ENCODE measurements at regions of chr2 and their contacts with region 1.

Region 1: GRCh38 chr2:196160101-196160500 is 11.3 kb downstream of the STK17B start:
- DNase-seq: no peak
- ATAC-seq: peak; percentile 62 to 63
- H3K4me3 ChIP-seq: no peak overlapping the region
- H3K27ac ChIP-seq: no peak overlapping the region
- H3K4me1 ChIP-seq: no peaks in the 10 kb centered on the region
- H3K27me3 ChIP-seq: no peaks in the 10 kb centered on the region

Region 2: DNA sequence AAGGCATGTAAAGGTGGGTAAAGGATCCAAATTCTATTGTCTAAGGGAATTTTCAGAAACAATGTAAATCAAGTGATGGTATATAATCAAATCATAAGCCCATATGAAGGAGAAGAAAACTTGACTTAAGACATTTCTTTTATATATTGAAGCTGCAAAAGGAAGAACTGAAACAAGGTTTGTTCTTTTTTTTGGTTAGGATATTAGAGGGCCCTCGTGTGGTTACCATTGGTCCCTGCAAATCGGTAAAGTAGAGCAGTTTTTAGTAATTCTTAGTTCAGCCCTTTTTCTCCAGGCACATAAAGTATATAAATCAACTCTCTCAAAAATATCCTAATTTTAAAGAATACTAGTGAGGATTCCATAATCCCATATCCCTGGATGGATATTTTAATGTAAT is 116.9 kb after region 1 on chr2:
- intact Hi-C with region 1: loop called in 1 of 4 experiments (anchors 10 kb)
- DNase-seq: no peak
- ATAC-seq: no peak
- H3K4me3 ChIP-seq: no peak overlapping the region
- H3K27ac ChIP-seq: no peak overlapping the region
- H3K4me1 ChIP-seq: peaks cover 2% of the 10 kb centered on the region
- H3K27me3 ChIP-seq: no peaks in the 10 kb centered on the region